ENCODE measurements at regions of chr4 and their contacts with region 1.

Region 1: GRCh38 chr4:165207431-165208220 is at the start of gene KLHL2:
- DNase-seq: peak; percentile 66 to 76 (median 66)
- H3K4me3 ChIP-seq: peak within 1 kb of the TSS; percentile 49 to 89
- H3K4me3 Mint-ChIP-seq: peak within 1 kb of the TSS; percentile 94 to 98 (median 96)
- H3K27ac ChIP-seq: peak within 1 kb of the TSS; percentile 50
- H3K27ac Mint-ChIP-seq: peak within 1 kb of the TSS; percentile 86 to 97 (median 93)
- H3K4me1 ChIP-seq: peaks cover 38% of the 10 kb centered on the region
- H3K4me1 Mint-ChIP-seq: peaks cover 42 to 64% (median 50%) of the 10 kb centered on the region in 4 donors
- H3K27me3 ChIP-seq: no peaks in the 10 kb centered on the region
- H3K27me3 Mint-ChIP-seq: no peaks in the 10 kb centered on the region
- total RNA-seq, gene KLHL2: 18.4 to 19.3 TPM

Region 2: DNA sequence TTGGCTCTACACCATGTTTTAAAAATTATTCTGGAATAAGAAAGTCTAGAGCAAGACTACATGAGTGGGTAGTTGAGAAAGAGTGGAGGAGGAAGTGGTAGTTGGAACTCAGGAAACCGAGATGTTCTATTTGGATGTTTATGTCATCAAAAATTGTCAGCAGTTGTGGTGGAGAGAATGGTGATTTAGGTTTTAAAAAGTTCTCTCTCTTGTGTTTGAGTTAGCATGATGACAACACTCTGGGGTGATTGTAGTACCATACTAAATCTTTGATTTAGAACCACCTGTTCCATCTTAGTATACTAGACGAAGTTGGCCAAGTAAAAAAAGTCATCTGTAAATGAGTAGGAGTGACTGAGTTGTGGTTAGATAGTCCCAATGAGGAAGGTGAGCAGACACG is 40.5 kb after region 1 on chr4:
- CTCF ChIA-PET with region 1: no interaction called
- POLR2A ChIA-PET with region 1: no interaction called
- intact Hi-C with region 1: loop called (anchors 10 kb)
- DNase-seq: peak in 1 of 5 donors; percentile 4
- H3K4me3 ChIP-seq: no peak overlapping the region
- H3K4me3 Mint-ChIP-seq: no peak overlapping the region
- H3K27ac ChIP-seq: no peak overlapping the region
- H3K27ac Mint-ChIP-seq: no peak overlapping the region
- H3K4me1 ChIP-seq: peaks cover 8% of the 10 kb centered on the region
- H3K4me1 Mint-ChIP-seq: peaks cover 0 to 8% (median 0%) of the 10 kb centered on the region in 4 donors
- H3K27me3 ChIP-seq: no peaks in the 10 kb centered on the region
- H3K27me3 Mint-ChIP-seq: no peaks in the 10 kb centered on the region

Measured in CD4-positive, alpha-beta memory T cell (primary cell).